Activated T-helper 1 cell treated with anti-CD3 and anti-CD28 coated beads, Interleukin-12 subunit alpha, Interleukin-12 subunit beta, Interleukin-2, Interleukin-4 antibody, amounts not matched to agents 30 ng/mL and 10 ng/mL and 1 ng/mL, durations not matched to agents 14 hours and 24 hours and 36 hours (primary cell): ENCODE measurements at regions of chr1 and their contacts with region 1.

Region 1: DNA sequence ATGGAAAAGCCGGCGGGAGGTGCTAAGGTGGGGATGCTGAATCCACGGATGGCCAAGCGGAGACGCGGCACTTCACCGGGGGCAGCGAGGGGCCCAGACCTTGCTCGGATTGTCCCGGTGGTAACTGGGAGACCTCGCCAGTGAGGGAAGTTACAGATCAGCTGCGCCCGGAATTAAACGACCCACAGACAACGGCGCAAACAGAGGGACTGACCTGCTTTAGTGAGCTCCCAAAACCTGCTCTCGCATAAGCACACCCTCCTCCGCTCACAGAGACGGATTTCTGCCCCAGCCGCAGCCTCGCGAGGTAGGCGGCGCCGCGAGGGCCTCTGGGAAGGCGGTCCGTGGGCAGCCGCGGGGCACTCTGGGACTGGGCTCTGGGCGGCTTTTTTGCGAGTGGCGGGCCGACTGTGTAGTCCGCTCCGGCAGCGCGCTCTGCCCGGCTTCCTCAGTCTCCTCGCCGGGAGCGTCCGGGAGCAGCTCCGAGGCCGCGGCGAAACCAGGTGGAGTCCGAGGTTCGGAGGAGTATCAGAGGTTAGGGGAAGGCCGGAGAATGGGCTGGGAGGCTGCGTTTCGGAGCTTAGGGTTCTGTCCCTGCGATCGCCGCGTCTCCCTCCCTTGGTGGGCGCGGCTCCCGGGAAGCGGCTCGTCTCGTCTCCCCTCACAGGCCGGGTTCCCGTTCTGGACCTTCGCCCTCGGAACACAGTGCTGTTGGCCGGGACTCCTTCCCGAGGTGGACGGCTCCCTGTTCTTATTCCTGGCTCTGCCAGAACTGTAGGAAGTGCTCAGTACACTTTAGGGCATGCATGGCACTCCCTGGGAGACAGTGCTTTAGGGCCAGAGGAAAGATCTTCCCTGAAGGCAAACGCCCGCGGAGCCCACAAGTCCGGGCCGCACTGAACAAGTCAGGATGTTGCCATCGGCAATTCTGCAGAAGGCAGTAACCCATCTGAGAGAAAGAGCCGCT is at the start of gene EXO5:
- DNase-seq: peak; percentile 84
- H3K4me3 Mint-ChIP-seq: peak within 1 kb of the TSS; percentile 82
- H3K27ac Mint-ChIP-seq: peak within 1 kb of the TSS; percentile 76
- H3K4me1 Mint-ChIP-seq: peaks cover 13% of the 10 kb centered on the region
- H3K27me3 Mint-ChIP-seq: no peaks in the 10 kb centered on the region
- total RNA-seq, gene EXO5: 18.2 and 18.3 TPM in 2 replicates

Region 2: GRCh38 chr1:40421431-40422384 is 87.0 kb before region 1 on chr1:
- intact Hi-C with region 1: no loop called
- DNase-seq: no peak
- H3K4me3 Mint-ChIP-seq: no peak overlapping the region
- H3K27ac Mint-ChIP-seq: peak overlapping the region; percentile 65
- H3K4me1 Mint-ChIP-seq: peaks cover 20% of the 10 kb centered on the region
- H3K27me3 Mint-ChIP-seq: no peaks in the 10 kb centered on the region

Region 3: DNA sequence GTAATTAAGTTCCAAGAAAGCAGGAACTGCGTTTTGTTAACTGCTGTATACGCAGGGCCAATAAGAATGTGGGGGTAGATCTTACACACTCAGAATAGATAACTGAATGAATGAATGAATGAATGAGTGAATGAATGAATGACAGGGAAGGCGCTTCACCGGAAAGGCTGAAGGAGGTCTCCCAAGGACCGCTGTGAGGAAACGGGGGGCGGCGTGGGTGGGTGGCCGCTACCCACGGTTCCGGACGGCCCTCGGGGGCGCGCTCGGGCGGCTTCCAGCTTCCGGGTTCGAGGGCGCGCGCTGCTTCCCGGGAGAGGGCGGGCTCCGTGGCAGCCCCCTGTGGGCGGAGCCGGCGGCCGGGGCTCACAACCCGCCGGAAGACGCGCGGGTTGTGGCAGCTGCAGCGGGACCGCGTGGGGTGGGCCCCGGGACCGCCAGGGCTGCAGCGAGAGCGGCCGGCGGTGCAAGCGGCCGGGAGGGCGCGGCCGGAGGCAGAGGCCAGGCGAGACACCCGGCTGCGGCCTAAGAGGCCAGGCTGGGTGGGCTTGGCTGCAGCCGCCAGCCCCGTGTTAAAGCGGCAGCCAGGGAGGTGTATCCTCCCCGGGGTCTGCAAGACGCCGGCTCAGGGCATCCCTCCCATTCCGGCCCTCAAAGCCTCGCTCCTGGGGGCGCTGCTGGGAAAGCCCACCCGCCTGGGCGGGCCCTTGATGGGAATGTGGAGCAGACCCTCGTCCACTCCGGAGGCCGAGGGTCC is 31.6 kb before region 1 on chr1 and contains the start of gene ZFP69:
- intact Hi-C with region 1: loop called (anchors 1 kb)
- DNase-seq: peak; percentile 64
- H3K4me3 Mint-ChIP-seq: peak within 1 kb of the TSS; percentile 85
- H3K27ac Mint-ChIP-seq: peak within 1 kb of the TSS; percentile 71
- H3K4me1 Mint-ChIP-seq: peaks cover 20% of the 10 kb centered on the region
- H3K27me3 Mint-ChIP-seq: peaks cover 2% of the 10 kb centered on the region
- total RNA-seq, gene ZFP69: 3.9 and 4.0 TPM in 2 replicates